MCF 10A (cell line): ENCODE measurements at regions of chr1 and their contacts with region 1.

Region 1: DNA sequence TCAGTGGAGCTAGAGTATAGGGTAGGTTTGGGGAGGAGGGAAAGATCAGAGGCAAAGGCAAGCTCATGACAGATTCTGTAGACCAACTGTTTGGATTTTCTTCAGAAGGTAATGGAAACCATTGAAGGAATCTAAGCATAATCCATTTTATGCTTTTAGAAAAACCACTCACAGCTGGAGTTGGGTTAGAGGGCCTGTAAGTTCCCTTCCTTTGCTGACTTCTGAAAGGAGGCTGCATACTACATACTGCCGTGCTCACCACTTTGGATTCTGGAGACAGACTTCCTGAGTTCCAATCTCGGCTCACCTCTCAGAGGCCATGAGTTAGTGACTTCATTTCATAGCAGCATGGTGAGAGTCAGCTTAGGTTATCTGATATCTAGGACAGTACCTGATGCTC is 6.4 kb upstream of the SYT2 start:
- DNase-seq: no peak
- H3K4me3 Mint-ChIP-seq: no peak overlapping the region
- H3K27ac Mint-ChIP-seq: no peak overlapping the region
- H3K4me1 Mint-ChIP-seq: no peaks in the 10 kb centered on the region
- H3K27me3 Mint-ChIP-seq: peaks cover 40% of the 10 kb centered on the region
- CTCF ChIP-seq: no peak

Region 2: DNA sequence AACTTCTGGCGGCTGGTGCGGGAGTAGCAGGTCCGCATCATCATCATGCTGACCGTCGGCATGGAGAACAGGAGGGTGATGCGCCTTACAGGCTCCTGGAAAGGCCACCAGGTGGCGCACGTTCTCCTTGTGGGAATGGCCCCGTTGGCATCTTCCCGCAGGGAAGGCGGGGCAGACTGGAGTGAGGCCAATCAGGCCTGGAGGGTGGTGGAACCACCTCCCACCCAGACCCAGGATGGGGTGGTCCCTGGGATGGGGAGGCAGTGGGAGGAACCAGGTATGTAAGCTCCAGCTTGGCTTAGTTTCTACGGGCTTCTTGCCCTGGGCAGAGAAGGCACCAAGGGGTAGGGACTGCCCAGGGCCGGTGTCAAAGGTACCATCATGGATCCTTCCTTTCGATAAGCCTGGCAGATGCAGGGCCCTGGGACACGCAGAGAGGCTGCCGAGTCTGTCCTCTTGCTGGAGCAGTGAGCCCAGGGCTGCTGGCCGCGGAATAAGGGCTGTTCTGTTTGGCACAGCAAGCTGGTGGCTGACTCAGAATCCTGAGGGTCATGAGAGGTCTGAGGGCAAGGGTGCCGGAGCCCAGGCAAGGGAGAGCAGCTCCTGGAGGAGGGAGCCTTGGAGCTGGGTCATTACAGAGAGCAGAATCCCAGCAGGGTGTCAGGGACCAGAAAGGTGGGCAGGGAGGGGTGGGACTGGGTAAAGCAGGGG is 531.7 kb before region 1 on chr1:
- CTCF ChIA-PET with region 1: interaction called, 14 read pairs
- POLR2A ChIA-PET with region 1: no interaction called
- intact Hi-C with region 1: loop called (anchors 1 kb)
- DNase-seq: peak; percentile 96
- H3K4me3 Mint-ChIP-seq: no peak overlapping the region
- H3K27ac Mint-ChIP-seq: no peak overlapping the region
- H3K4me1 Mint-ChIP-seq: peaks cover 13% of the 10 kb centered on the region
- H3K27me3 Mint-ChIP-seq: peaks cover 50% of the 10 kb centered on the region
- CTCF ChIP-seq: peak; percentile 100

Region 3: GRCh38 chr1:202283379-202283844 is 433.2 kb before region 1 on chr1:
- CTCF ChIA-PET with region 1: no interaction called
- POLR2A ChIA-PET with region 1: no interaction called
- intact Hi-C with region 1: no loop called
- DNase-seq: peak; percentile 100
- H3K4me3 Mint-ChIP-seq: peak overlapping the region; percentile 5
- H3K27ac Mint-ChIP-seq: peak overlapping the region; percentile 82
- H3K4me1 Mint-ChIP-seq: peaks cover 56% of the 10 kb centered on the region
- H3K27me3 Mint-ChIP-seq: peaks cover 14% of the 10 kb centered on the region
- CTCF ChIP-seq: no peak

Region 4: DNA sequence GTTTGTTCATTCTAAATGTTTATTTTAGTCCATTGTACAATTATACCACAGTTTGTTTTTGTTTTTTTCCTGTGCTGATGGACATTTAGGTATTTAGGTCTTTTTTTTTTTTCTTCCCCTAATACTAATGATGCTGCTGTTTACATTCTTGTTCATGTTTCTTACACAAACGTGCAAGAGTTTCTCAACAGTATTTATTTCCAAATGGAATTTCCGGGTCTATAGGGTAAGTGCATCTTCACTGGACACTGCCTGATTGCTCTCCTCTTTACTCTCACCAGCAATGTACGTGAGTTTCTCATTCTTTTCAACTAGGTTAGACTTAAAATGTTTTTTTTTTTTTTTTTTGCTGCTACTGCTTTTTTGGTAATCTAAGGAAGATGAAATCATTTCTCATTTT is 245.4 kb before region 1 on chr1:
- CTCF ChIA-PET with region 1: interaction called, 15 read pairs
- POLR2A ChIA-PET with region 1: no interaction called
- intact Hi-C with region 1: no loop called
- DNase-seq: no peak
- H3K4me3 Mint-ChIP-seq: no peak overlapping the region
- H3K27ac Mint-ChIP-seq: no peak overlapping the region
- H3K4me1 Mint-ChIP-seq: peaks cover 8% of the 10 kb centered on the region
- H3K27me3 Mint-ChIP-seq: no peaks in the 10 kb centered on the region
- CTCF ChIP-seq: no peak

Region 5: GRCh38 chr1:202575918-202576653 is 140.6 kb before region 1 on chr1:
- CTCF ChIA-PET with region 1: no interaction called
- POLR2A ChIA-PET with region 1: no interaction called
- intact Hi-C with region 1: no loop called
- DNase-seq: peak; percentile 27
- H3K4me3 Mint-ChIP-seq: no peak overlapping the region
- H3K27ac Mint-ChIP-seq: no peak overlapping the region
- H3K4me1 Mint-ChIP-seq: peaks cover 41% of the 10 kb centered on the region
- H3K27me3 Mint-ChIP-seq: no peaks in the 10 kb centered on the region
- CTCF ChIP-seq: no peak

Region 6: DNA sequence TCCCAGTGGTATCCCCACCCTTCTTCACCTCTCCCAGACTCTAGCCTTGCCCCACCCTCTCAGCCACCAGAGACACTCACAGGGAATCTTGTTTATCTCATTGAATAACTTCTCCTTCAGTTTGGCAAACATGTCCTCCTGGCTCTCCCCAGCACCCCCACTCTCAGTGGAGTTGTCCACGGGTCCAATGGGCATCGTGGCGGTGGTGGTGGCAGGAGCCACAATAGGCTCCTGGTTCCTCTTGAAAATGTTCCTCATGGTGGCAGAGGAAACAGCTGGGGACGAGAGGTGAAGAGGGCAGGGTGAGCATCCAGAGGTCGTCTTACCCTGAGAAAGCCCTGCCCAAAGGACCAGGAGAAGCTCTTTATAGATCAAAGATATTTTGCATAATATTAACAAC is 111.1 kb before region 1 on chr1:
- CTCF ChIA-PET with region 1: interaction called, 35 read pairs
- POLR2A ChIA-PET with region 1: no interaction called
- intact Hi-C with region 1: loop called (anchors 1 kb)
- DNase-seq: no peak
- H3K4me3 Mint-ChIP-seq: no peak overlapping the region
- H3K27ac Mint-ChIP-seq: no peak overlapping the region
- H3K4me1 Mint-ChIP-seq: no peaks in the 10 kb centered on the region
- H3K27me3 Mint-ChIP-seq: no peaks in the 10 kb centered on the region
- CTCF ChIP-seq: no peak

Region 7: DNA sequence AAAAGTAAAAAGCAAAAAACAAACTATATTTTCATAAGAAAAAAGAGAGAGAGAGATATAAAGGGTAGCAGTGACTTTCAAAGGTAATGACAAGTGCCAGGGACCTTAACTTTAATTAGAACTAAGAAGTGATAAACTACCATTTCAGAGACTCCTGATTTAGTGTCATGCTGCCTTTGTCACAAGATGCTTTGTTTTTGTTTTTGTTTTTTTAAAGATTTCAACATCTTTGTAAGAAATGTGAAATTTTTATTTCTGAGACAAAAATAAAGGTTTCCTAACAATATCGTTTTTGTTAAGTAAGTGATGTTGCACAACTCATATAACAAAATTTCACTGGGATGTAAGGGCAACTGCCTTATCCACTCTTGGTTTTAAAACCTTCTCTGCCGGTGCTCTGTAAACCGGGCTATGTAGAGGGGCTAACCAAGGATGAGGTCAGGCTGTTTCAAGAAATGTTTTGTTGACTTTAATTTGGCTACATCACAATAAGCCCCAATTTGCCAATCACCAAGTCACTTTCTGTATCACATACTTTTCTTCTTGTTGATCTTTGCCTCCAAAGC is 28.8 kb after region 1 on chr1:
- CTCF ChIA-PET with region 1: interaction called, 15 read pairs
- POLR2A ChIA-PET with region 1: no interaction called
- intact Hi-C with region 1: no loop called
- DNase-seq: no peak
- H3K4me3 Mint-ChIP-seq: no peak overlapping the region
- H3K27ac Mint-ChIP-seq: no peak overlapping the region
- H3K4me1 Mint-ChIP-seq: no peaks in the 10 kb centered on the region
- H3K27me3 Mint-ChIP-seq: no peaks in the 10 kb centered on the region
- CTCF ChIP-seq: no peak

Region 8: GRCh38 chr1:203926025-203926540 is 1209.4 kb after region 1 on chr1:
- CTCF ChIA-PET with region 1: no interaction called
- POLR2A ChIA-PET with region 1: no interaction called
- intact Hi-C with region 1: no loop called
- DNase-seq: peak; percentile 85
- H3K4me3 Mint-ChIP-seq: no peak overlapping the region
- H3K27ac Mint-ChIP-seq: peak overlapping the region; percentile 57
- H3K4me1 Mint-ChIP-seq: peaks cover 21% of the 10 kb centered on the region
- H3K27me3 Mint-ChIP-seq: no peaks in the 10 kb centered on the region
- CTCF ChIP-seq: no peak